ENCODE measurements at regions of chrX and their contacts with region 1.

Region 1: GRCh38 chrX:118468122-118468521 is 27.5 kb upstream of the DOCK11 start:
- DNase-seq: no peak
- ATAC-seq: no peak
- H3K4me3 ChIP-seq: no peak overlapping the region
- H3K27ac ChIP-seq: no peak overlapping the region
- H3K4me1 ChIP-seq: no peaks in the 10 kb centered on the region
- H3K27me3 ChIP-seq: no peaks in the 10 kb centered on the region
- CTCF ChIP-seq: no peak
- POLR2A ChIP-seq: no peak

Region 2: DNA sequence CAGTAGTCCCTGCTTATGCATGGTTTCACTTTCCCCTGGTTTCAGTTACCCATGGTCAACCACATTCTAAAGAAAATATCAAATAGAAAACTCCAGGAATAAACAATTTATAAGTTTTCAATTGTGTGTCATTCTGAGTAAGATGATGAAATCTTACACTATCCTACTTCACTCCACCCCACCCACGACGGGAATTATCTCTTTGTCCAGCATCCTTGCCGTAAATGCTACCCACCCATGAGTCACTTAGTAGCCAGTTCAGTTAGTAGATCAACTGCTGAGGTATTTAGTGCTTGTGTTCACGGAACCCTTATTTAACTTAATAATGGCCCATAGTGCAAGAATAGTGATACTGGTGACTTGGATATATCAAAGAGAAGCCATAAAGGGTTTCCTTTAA is 442.9 kb before region 1 on chrX:
- in situ Hi-C with region 1: no loop called
- intact Hi-C with region 1: no loop called
- DNase-seq: no peak
- ATAC-seq: no peak
- H3K4me3 ChIP-seq: no peak overlapping the region
- H3K27ac ChIP-seq: no peak overlapping the region
- H3K4me1 ChIP-seq: no peaks in the 10 kb centered on the region
- H3K27me3 ChIP-seq: no peaks in the 10 kb centered on the region
- CTCF ChIP-seq: no peak
- POLR2A ChIP-seq: no peak

Region 3: GRCh38 chrX:118595501-118596042 is 127.5 kb after region 1 on chrX:
- in situ Hi-C with region 1: loop called in 2 of 4 experiments (anchors 10 to 25 kb)
- intact Hi-C with region 1: no loop called
- DNase-seq: no peak
- ATAC-seq: no peak
- H3K4me3 ChIP-seq: no peak overlapping the region
- H3K27ac ChIP-seq: no peak overlapping the region
- H3K4me1 ChIP-seq: no peaks in the 10 kb centered on the region
- H3K27me3 ChIP-seq: no peaks in the 10 kb centered on the region
- CTCF ChIP-seq: no peak
- POLR2A ChIP-seq: no peak

Region 4: DNA sequence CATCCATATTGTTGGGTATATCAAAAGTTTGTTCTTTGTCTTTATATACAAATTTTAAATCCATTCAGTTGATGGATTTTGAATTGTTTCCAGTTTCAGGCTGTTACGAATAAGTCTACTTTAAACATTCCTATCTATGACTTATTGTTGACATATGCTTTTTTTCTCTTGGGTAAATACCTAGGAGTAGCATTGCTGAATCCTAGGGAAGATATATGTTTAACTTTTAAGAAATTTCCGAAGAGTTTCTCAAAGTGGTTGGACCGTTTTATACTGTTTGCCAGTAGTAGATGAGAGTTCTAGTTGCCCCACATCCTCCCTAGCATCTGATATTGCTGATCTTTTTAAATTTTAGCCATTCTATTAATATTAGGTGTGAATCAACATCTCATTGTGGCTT is 198.4 kb after region 1 on chrX:
- in situ Hi-C with region 1: no loop called
- intact Hi-C with region 1: no loop called
- DNase-seq: no peak
- ATAC-seq: no peak
- H3K4me3 ChIP-seq: no peak overlapping the region
- H3K27ac ChIP-seq: no peak overlapping the region
- H3K4me1 ChIP-seq: no peaks in the 10 kb centered on the region
- H3K27me3 ChIP-seq: no peaks in the 10 kb centered on the region
- CTCF ChIP-seq: no peak
- POLR2A ChIP-seq: no peak

Region 5: GRCh38 chrX:118948270-118948669 is 480.1 kb after region 1 on chrX:
- in situ Hi-C with region 1: no loop called
- intact Hi-C with region 1: no loop called
- DNase-seq: no peak
- ATAC-seq: no peak
- H3K4me3 ChIP-seq: no peak overlapping the region
- H3K27ac ChIP-seq: no peak overlapping the region
- H3K4me1 ChIP-seq: no peaks in the 10 kb centered on the region
- H3K27me3 ChIP-seq: no peaks in the 10 kb centered on the region
- CTCF ChIP-seq: no peak
- POLR2A ChIP-seq: no peak

Measured in gastrocnemius medialis (tissue), 4 donors.